Gastrocnemius medialis (tissue), 4 donors: ENCODE measurements at regions of chr15 and their contacts with region 1.

Region 1: DNA sequence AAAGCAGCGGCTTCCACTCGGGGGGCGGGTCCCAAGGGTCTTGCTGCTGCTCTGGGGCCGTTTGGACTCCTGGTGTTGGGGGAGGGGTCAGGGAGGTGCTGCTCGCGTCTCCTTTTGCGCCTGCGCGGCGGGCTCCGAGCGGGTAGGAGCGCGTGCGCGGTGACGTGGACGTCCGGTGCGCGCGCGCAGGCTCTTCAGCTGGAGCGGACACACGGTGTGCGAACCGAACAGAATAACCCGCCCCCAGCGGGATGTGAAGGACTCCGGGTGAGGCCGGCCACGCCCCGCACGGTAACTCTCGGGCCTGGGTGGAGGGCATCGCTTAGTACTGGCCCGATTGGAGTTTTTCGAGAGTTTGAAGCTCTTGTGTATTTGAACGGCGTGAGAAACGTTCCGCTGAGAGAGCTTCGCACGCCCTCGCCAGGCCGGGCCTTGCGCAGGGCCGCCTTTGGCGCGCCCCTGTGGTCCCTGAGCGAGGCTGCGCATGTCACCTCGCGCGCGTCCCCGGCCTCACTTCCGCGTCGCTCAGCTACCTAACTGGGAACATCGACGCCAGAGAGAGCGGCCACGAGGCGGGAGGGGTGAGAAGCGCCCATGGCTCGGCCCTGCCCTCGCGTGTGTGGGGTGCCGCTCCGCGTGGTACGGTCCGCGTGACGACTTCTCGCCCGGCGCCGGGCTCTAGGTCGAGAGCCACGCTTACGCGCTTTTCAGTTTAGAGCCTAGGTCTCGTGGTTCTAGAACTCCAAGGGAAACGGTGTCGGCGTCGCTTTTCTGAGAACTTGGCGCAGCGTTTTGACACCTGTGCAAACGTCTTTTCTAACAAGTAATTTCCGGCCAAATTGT is at the start of gene MGA:
- DNase-seq: peak; percentile 73 to 79
- ATAC-seq: peak; percentile 79 to 81
- H3K4me3 ChIP-seq: peak within 1 kb of the TSS; percentile 52 to 88 (median 70)
- H3K27ac ChIP-seq: peak within 1 kb of the TSS; percentile 70 to 83 (median 80)
- H3K4me1 ChIP-seq: peaks cover 38 to 40% of the 10 kb centered on the region in 2 donors
- H3K27me3 ChIP-seq: no peaks in the 10 kb centered on the region
- CTCF ChIP-seq: peak in 2 of 5 experiments; percentile 10 to 13
- POLR2A ChIP-seq: peak; percentile 38 to 71
- total RNA-seq, gene MGA: 17.0 to 27.8 (median 23.6) TPM

Region 2: DNA sequence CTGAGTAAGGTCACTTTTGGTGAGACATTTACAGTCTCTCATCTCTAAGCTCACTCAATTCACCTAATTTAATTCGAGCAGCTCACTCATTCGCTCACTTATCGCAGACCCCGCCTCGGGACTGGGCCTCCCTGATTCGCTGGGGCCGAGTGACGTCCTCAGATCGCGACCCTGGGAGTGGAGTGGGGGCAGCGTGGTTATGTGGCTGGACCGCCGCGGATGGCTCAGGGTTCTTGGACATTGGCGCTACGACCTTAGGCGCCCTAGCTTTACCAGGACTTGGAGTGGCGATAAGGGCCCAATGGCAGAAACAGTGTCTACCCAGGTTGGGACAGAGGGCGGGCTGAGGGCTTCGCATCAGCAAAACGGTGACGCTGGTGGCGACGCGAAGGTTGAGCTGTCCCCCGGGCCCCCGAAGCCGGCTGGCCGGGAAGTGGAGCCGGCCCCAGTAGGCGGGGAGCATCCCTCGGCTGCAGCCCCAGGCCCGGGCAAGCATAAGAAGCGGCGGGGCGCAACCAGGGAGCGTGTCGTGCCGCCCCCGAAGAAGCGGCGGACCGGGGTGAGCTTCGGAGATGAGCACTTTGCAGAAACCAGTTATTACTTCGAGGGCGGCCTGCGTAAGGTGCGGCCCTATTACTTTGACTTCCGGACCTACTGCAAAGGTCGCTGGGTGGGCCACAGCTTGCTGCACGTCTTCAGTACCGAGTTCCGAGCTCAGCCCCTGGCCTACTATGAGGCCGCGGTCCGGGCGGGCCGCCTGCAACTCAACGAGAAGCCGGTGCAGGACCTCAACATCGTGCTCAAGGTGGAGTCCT is 1091.1 kb before region 1 on chr15 and contains the start of gene RPUSD2:
- in situ Hi-C with region 1: no loop called
- intact Hi-C with region 1: no loop called
- DNase-seq: peak; percentile 89 to 90
- ATAC-seq: peak; percentile 66 to 68
- H3K4me3 ChIP-seq: peak within 1 kb of the TSS; percentile 81 to 98 (median 88)
- H3K27ac ChIP-seq: peak within 1 kb of the TSS; percentile 79 to 94 (median 86)
- H3K4me1 ChIP-seq: peaks cover 14 to 22% of the 10 kb centered on the region in 2 donors
- H3K27me3 ChIP-seq: no peaks in the 10 kb centered on the region
- CTCF ChIP-seq: no peak
- POLR2A ChIP-seq: peak; percentile 72 to 81
- total RNA-seq, gene RPUSD2: 4.5 to 9.1 (median 6.5) TPM

Region 3: DNA sequence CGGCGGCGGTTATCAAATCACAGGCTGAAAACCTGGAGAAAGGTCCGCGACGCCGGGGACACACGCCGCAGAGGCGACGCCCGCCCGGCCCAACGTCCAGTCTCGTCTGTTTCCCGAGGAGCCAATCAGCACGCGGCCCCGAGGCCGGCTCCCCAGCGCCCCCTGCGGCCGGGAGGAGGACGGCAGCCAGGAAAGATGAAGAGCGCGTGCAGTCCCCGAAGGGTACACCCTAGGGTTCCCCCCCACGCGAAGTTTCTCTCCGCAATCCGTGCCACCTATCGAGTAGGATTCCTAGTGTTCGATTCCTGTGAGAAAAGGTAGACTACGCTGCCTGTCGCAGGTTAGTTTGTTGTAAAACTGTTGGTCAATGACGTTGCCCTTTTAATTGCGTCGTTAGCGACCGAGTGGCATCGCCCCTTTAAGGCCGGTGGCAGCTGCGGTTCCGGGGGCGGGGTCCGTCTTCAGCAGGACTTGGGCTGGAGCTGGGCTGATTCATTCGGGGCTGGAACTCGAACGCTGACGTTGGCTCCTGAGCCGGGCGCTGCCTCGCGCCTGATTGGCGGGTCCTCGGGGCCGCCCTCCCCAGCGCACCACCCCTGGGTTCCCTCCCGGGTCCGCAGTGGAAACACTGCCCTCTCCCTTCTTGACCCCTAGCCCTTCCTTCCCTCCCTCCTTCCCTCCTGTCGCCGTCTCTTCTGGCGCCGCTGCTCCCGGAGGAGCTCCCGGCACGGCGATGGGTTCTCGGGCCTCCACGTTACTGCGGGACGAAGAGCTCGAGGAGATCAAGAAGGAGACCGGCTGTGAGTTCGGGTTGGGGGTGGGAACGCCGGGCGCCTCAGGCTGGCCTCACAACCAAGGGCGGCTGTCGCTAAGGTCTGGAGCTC is 429.6 kb before region 1 on chr15 and contains the starts of genes CHP1 and EXD1:
- in situ Hi-C with region 1: no loop called
- intact Hi-C with region 1: no loop called
- DNase-seq: peak; percentile 98 to 99
- ATAC-seq: peak; percentile 91 to 94
- H3K4me3 ChIP-seq: peak within 1 kb of the TSS; percentile 73 to 91 (median 86)
- H3K27ac ChIP-seq: peak within 1 kb of the TSS; percentile 91 to 97 (median 94)
- H3K4me1 ChIP-seq: peaks cover 31 to 35% of the 10 kb centered on the region in 2 donors
- H3K27me3 ChIP-seq: no peaks in the 10 kb centered on the region
- CTCF ChIP-seq: peak; percentile 91 to 98 (median 93)
- POLR2A ChIP-seq: peak; percentile 88 to 90
- total RNA-seq, gene CHP1: 208 to 293 (median 266) TPM
- total RNA-seq, gene EXD1: not detected

Region 4: GRCh38 chr15:41544650-41545015 is 115.8 kb before region 1 on chr15:
- in situ Hi-C with region 1: no loop called
- intact Hi-C with region 1: loop called (anchors 5 kb)
- DNase-seq: peak in 1 of 2 donors; percentile 54
- ATAC-seq: peak; percentile 14 to 35
- H3K4me3 ChIP-seq: peak overlapping the region; percentile 69 to 96 (median 90)
- H3K27ac ChIP-seq: peak overlapping the region; percentile 78 to 89 (median 86)
- H3K4me1 ChIP-seq: peaks cover 8 to 10% of the 10 kb centered on the region in 2 donors
- H3K27me3 ChIP-seq: no peaks in the 10 kb centered on the region
- CTCF ChIP-seq: no peak
- POLR2A ChIP-seq: no peak

Region 5: GRCh38 chr15:41698779-41699178 is 38.3 kb after region 1 on chr15:
- in situ Hi-C with region 1: no loop called
- intact Hi-C with region 1: no loop called
- DNase-seq: no peak
- ATAC-seq: no peak
- H3K4me3 ChIP-seq: no peak overlapping the region
- H3K27ac ChIP-seq: no peak overlapping the region
- H3K4me1 ChIP-seq: peaks cover 0 to 4% of the 10 kb centered on the region in 2 donors
- H3K27me3 ChIP-seq: no peaks in the 10 kb centered on the region
- CTCF ChIP-seq: no peak
- POLR2A ChIP-seq: no peak